SK-N-SH (cell line): ENCODE measurements at regions of chr1 and their contacts with region 1.

Region 1: GRCh38 chr1:26363549-26364448 is 8.8 kb downstream of the ZNF683 start:
- DNase-seq: peak; percentile 86
- H3K4me3 ChIP-seq: no peak overlapping the region; a peak in 1 of 4 replicates
- H3K27ac ChIP-seq: no peak overlapping the region
- H3K4me1 ChIP-seq: peaks cover 0 to 9% of the 10 kb centered on the region in 2 experiments; a peak in 2 of 4 replicates
- H3K27me3 ChIP-seq: peaks cover 21% of the 10 kb centered on the region; the same call in 1 of the 2 replicates
- CTCF ChIP-seq: peak; percentile 93
- EP300 ChIP-seq: no peak
- RAD21 ChIP-seq: peak; percentile 75

Region 2: GRCh38 chr1:26279456-26280332 is 84.1 kb before region 1 on chr1 and contains the start of gene SH3BGRL3:
- CTCF ChIA-PET with region 1: interaction called, 43 read pairs
- POLR2A ChIA-PET with region 1: no interaction called
- DNase-seq: peak; percentile 96
- H3K4me3 ChIP-seq: peak within 1 kb of the TSS; percentile 85 to 95
- H3K27ac ChIP-seq: peak within 1 kb of the TSS; percentile 76 to 87
- H3K4me1 ChIP-seq: peaks cover 36 to 71% of the 10 kb centered on the region in 2 experiments; a peak in 3 of 4 replicates
- H3K27me3 ChIP-seq: no peaks in the 10 kb centered on the region
- CTCF ChIP-seq: peak; percentile 62
- EP300 ChIP-seq: no peak
- RAD21 ChIP-seq: peak; percentile 19; the same call in 1 of the 2 replicates
- polyA plus RNA-seq, gene SH3BGRL3: 131 and 202 TPM in 2 replicates

Region 3: GRCh38 chr1:26321315-26322041 is 42.3 kb before region 1 on chr1:
- CTCF ChIA-PET with region 1: interaction called, 24 read pairs
- POLR2A ChIA-PET with region 1: no interaction called
- DNase-seq: peak; percentile 91
- H3K4me3 ChIP-seq: peak overlapping the region in 1 of 2 experiments; percentile 17; a peak in 1 of 4 replicates
- H3K27ac ChIP-seq: no peak overlapping the region
- H3K4me1 ChIP-seq: peaks cover 0 to 3% of the 10 kb centered on the region in 2 experiments; a peak in 1 of 4 replicates
- H3K27me3 ChIP-seq: no peaks in the 10 kb centered on the region
- CTCF ChIP-seq: peak; percentile 88
- EP300 ChIP-seq: no peak
- RAD21 ChIP-seq: peak; percentile 92

Region 4: DNA sequence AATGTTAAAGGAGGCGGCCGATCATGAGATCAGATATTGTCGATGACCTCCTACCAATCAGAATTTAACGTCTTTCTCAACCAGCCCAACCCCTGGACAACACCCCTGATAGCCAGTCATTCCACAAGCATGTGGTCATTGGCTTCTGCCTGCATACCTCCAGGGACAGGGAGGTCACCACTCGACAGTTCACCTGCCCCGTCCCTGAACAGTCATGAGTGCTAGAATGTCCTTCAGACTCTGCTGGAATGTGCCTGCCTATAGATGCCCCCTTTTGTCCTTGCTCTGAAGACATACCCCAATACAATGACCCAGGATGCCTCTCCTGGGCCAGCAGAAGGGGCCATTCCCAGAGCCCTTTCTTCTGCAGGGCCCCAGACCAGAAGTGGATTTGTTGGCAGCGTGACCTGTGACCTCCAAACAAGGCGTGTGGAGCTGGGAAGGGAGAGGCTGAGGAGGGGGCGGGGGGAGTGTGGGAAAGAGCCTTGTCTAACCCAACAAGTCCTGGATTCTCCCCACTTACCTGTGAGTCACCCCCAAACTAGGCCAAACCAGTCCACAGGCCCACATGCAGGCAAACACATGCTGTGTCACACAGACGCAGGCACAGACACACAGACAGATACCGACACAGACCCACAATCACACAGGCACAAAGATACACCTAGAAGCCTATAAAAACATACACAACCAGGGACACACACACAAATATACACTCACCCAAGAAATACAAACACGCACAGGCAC is 12.0 kb before region 1 on chr1:
- CTCF ChIA-PET with region 1: interaction called, 99 read pairs
- POLR2A ChIA-PET with region 1: no interaction called
- DNase-seq: no peak
- H3K4me3 ChIP-seq: no peak overlapping the region
- H3K27ac ChIP-seq: no peak overlapping the region
- H3K4me1 ChIP-seq: no peaks in the 10 kb centered on the region
- H3K27me3 ChIP-seq: no peaks in the 10 kb centered on the region
- CTCF ChIP-seq: no peak
- EP300 ChIP-seq: no peak
- RAD21 ChIP-seq: no peak

Region 5: DNA sequence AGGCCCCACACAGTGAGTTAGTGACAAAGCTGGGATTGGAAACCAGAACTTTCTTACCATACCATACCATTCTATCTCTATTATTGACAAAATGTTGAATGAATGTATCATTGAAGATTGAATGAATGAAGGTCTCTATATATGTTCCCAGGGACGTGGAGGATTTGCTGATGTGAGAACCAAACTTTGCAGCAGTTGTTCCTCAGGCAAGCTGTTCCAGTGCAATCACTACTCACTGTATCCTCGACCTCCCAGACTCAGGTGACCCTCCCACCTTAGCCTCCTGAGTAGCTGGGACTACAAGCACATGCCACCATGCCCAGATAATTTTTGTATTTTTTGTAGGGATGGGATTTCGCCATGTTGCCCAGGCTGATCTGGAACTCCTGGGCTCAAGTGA is 35.2 kb after region 1 on chr1:
- CTCF ChIA-PET with region 1: interaction called, 21 read pairs
- POLR2A ChIA-PET with region 1: no interaction called
- DNase-seq: no peak
- H3K4me3 ChIP-seq: no peak overlapping the region
- H3K27ac ChIP-seq: no peak overlapping the region
- H3K4me1 ChIP-seq: no peaks in the 10 kb centered on the region
- H3K27me3 ChIP-seq: no peaks in the 10 kb centered on the region
- CTCF ChIP-seq: no peak
- EP300 ChIP-seq: no peak
- RAD21 ChIP-seq: no peak

Region 6: DNA sequence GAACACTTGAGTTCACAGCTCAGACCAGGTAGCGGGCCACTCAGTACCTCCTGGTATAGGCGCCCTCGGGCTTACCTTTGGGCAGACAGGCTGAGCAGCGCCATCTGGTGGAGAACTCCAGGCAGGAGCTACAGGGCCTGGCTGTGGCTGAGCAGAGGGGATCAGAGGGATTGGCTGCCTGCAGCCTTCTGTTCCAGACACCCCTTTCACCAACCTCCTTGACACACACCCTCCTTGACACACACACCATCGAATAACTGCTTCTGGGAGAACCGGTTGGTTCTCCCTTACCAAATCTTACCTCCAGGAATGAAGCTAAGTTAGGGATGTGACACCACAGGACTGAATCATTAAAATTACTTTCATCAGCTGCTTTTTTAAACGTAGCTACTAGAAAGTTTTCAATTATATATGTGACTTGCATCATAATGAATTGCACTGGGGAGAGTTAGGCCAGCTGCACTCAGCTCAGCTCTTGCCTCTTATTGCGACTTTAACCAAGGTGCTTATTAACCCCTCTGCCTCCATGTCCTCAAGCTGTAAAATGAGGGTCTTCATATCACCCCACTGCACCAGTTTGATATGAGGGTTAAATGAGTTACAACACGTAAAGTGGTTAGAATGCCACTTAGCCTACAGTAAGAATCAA is 53.4 kb after region 1 on chr1:
- CTCF ChIA-PET with region 1: interaction called, 53 read pairs
- POLR2A ChIA-PET with region 1: no interaction called
- DNase-seq: peak; percentile 85
- H3K4me3 ChIP-seq: no peak overlapping the region
- H3K27ac ChIP-seq: no peak overlapping the region
- H3K4me1 ChIP-seq: no peaks in the 10 kb centered on the region
- H3K27me3 ChIP-seq: peaks cover 5% of the 10 kb centered on the region
- CTCF ChIP-seq: peak; percentile 81
- EP300 ChIP-seq: no peak
- RAD21 ChIP-seq: peak; percentile 69

Region 7: GRCh38 chr1:26450908-26451307 is 87.1 kb after region 1 on chr1:
- CTCF ChIA-PET with region 1: no interaction called
- POLR2A ChIA-PET with region 1: no interaction called
- DNase-seq: no peak
- H3K4me3 ChIP-seq: no peak overlapping the region
- H3K27ac ChIP-seq: no peak overlapping the region
- H3K4me1 ChIP-seq: no peaks in the 10 kb centered on the region
- H3K27me3 ChIP-seq: no peaks in the 10 kb centered on the region
- CTCF ChIP-seq: no peak
- EP300 ChIP-seq: no peak
- RAD21 ChIP-seq: no peak